AG04450 (cell line): ENCODE measurements at regions of chr12 and their contacts with region 1.

Region 1: DNA sequence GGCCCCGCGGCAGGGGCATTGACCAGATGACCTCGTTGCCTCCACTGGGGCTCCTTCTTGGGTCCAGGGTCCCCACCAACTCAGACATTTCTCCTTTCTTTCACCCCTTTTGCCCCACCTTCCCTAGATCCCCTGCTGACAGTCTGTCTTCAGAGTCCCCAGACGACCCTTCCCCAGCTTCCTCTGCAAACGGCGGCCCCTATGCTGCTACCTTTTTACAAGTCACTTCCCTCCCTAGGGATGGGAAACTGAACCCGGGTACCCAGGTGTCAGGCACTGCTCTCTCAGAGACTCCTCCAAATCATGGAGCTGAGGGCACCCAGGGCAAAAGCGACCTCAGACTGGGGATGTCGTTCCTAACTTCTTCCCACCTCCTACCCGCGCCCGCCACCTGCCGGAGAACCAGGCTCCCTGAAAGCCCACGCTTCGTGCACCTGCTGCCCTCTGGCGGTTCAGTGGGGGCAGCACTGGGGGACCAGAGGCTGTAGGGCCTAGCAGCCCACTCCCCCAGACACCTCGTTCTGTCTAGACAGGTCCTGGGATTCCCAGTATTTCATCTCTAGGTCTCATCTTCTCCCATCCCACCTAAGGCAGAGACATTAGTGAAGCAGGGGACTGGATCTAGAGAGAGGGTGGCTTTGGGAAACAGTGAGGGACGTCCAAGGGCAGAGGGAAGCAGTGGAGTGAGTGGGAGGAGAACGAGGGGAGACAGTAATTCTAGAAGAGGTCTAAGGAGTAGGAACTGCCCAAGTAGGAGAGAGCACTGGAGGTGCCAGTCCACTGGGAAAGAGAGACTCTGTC is 4.9 kb downstream of the ZNF385A start:
- DNase-seq: peak; percentile 34
- H3K4me3 ChIP-seq: peak overlapping the region; percentile 58
- H3K27ac ChIP-seq: no peak overlapping the region
- H3K27me3 ChIP-seq: no peaks in the 10 kb centered on the region
- CTCF ChIP-seq: peak; percentile 100

Region 2: GRCh38 chr12:54201001-54201794 is 178.4 kb before region 1 on chr12:
- CTCF ChIA-PET with region 1: interaction called, 12 read pairs
- POLR2A ChIA-PET with region 1: no interaction called
- DNase-seq: peak; percentile 48
- H3K4me3 ChIP-seq: no peak overlapping the region
- H3K27ac ChIP-seq: no peak overlapping the region
- H3K27me3 ChIP-seq: peaks cover 33% of the 10 kb centered on the region
- CTCF ChIP-seq: peak; percentile 100

Region 3: GRCh38 chr12:54251667-54252284 is 127.8 kb before region 1 on chr12:
- CTCF ChIA-PET with region 1: interaction called, 26 read pairs
- POLR2A ChIA-PET with region 1: no interaction called
- DNase-seq: no peak
- H3K4me3 ChIP-seq: no peak overlapping the region
- H3K27ac ChIP-seq: no peak overlapping the region
- H3K27me3 ChIP-seq: no peaks in the 10 kb centered on the region
- CTCF ChIP-seq: peak; percentile 76

Region 4: GRCh38 chr12:54285150-54286041 is 94.2 kb before region 1 on chr12:
- CTCF ChIA-PET with region 1: interaction called, 22 read pairs
- POLR2A ChIA-PET with region 1: interaction called, 4 read pairs
- DNase-seq: no peak
- H3K4me3 ChIP-seq: 0 out of 2 replicates have a peak overlapping the region, but pooled peaks have one; percentile 7
- H3K27ac ChIP-seq: peak overlapping the region; percentile 31
- H3K27me3 ChIP-seq: no peaks in the 10 kb centered on the region
- CTCF ChIP-seq: peak; percentile 46

Region 5: DNA sequence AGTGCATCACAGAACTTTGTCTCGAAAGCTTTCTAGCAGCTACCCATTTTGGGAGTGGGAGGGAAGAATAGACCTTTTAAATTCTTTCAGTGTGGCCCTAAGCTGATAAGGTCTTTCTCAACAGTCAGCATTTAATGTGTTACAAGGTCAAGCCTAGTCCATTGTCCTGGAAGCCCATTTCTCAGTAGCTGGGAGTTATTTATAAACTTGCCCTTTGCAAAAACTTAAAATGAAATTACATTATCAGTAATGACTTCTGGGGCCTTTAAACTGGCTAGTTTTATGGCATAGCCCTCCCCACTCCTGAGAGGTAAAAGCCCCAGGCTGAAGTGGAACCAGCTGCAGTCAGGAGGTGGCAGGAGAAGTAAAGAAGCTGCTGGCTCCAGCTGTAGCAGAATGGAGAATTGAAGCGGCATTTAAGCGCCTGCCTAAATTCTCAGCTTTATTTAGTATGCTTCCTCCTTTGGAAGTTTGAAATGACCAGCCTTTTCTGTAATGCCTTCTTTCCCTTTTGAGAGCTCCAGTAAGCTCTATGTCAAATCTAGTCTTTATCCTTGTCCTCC is 42.2 kb before region 1 on chr12:
- CTCF ChIA-PET with region 1: interaction called, 17 read pairs
- POLR2A ChIA-PET with region 1: no interaction called
- DNase-seq: no peak
- H3K4me3 ChIP-seq: no peak overlapping the region
- H3K27ac ChIP-seq: no peak overlapping the region
- H3K27me3 ChIP-seq: no peaks in the 10 kb centered on the region
- CTCF ChIP-seq: peak; percentile 11; the same call in 1 of the 2 replicates

Region 6: DNA sequence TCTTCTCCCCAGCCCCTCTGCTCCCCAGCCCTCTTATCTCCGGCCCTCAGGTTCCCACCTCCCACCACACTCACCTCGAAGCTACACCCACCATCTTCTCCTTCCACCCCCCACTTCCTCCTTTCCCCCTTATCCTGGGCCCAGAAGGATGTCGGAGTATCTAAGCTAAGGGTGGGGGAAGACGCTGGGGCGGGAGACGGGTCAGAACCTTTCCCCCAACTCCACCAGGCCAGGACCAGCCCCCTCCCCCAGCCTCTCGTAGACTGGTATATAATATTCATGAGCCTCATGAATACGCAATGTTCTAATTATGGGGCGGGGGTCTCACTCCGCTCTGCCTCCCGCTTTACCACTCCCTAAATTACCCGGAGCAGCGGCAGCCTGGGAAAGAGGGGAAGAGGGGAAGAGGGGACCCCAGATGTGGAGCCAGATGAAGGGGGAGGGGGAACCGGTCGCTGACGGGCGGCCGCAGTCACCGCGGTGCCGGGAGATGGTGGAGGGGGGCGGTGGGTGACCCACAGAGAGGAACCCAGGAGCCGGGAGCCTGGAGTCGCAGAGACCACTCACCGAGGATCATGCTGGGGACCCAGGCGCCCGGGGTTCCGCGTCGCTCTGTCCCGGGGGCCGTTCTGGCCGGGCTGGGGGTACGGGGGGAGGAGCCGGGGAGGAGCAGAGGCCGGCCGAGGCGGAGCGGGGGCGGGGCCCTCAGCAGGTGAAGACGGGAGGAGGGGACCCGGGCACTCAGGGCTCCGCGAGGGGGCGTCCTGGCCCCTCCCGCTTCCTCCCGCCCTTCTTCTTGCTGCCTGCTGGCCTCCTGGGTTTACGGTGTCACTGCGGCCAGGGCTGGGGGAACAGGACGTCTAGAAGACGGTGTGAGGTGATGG is 11.3 kb after region 1 on chr12:
- CTCF ChIA-PET with region 1: interaction called, 212 read pairs
- POLR2A ChIA-PET with region 1: interaction called, 3 read pairs
- DNase-seq: no peak
- H3K4me3 ChIP-seq: no peak overlapping the region
- H3K27ac ChIP-seq: no peak overlapping the region
- H3K27me3 ChIP-seq: no peaks in the 10 kb centered on the region
- CTCF ChIP-seq: no peak

Region 7: GRCh38 chr12:54419088-54419892 is 39.7 kb after region 1 on chr12 and contains the start of gene ITGA5:
- CTCF ChIA-PET with region 1: interaction called, 23 read pairs
- POLR2A ChIA-PET with region 1: no interaction called
- DNase-seq: no peak
- H3K4me3 ChIP-seq: peak within 1 kb of the TSS; percentile 91
- H3K27ac ChIP-seq: peak within 1 kb of the TSS; percentile 83
- H3K27me3 ChIP-seq: no peaks in the 10 kb centered on the region
- CTCF ChIP-seq: no peak
- polyA plus RNA-seq, gene ITGA5: 160 and 185 TPM in 2 replicates